ENCODE measurements at regions of chrX and their contacts with region 1.

Region 1: GRCh38 chrX:120308959-120309872 is 2.0 kb downstream of the TMEM255A start:
- DNase-seq: peak; percentile 77
- ATAC-seq: peak; percentile 86
- H3K4me3 ChIP-seq: peak overlapping the region; percentile 71
- H3K27ac ChIP-seq: no peak overlapping the region
- H3K4me1 ChIP-seq: peaks cover 19% of the 10 kb centered on the region
- H3K27me3 ChIP-seq: no peaks in the 10 kb centered on the region
- CTCF ChIP-seq: peak; percentile 57

Region 2: GRCh38 chrX:120250522-120251271 is 58.5 kb before region 1 on chrX and contains the start of gene ZBTB33:
- CTCF ChIA-PET with region 1: no interaction called
- POLR2A ChIA-PET with region 1: no interaction called
- intact Hi-C with region 1: loop called (anchors 5 kb)
- DNase-seq: peak; percentile 96
- ATAC-seq: peak; percentile 98
- H3K4me3 ChIP-seq: peak within 1 kb of the TSS; percentile 96
- H3K27ac ChIP-seq: peak within 1 kb of the TSS; percentile 65
- H3K4me1 ChIP-seq: peaks cover 8% of the 10 kb centered on the region
- H3K27me3 ChIP-seq: no peaks in the 10 kb centered on the region
- CTCF ChIP-seq: peak; percentile 67
- total RNA-seq, gene ZBTB33: 12.1 and 14.3 TPM in 2 replicates